ENCODE measurements at regions of chr4 and their contacts with region 1.

Region 1: GRCh38 chr4:169010125-169011023 is at the start of gene CBR4:
- DNase-seq: peak; percentile 99
- ATAC-seq: peak; percentile 99
- total RNA-seq, gene CBR4: 21.3 TPM

Region 2: GRCh38 chr4:168643111-168643795 is 367.1 kb before region 1 on chr4:
- intact Hi-C with region 1: no loop called
- DNase-seq: no peak
- ATAC-seq: no peak

Region 3: GRCh38 chr4:168731006-168731636 is 279.3 kb before region 1 on chr4:
- intact Hi-C with region 1: no loop called
- DNase-seq: no peak
- ATAC-seq: no peak

Region 4: DNA sequence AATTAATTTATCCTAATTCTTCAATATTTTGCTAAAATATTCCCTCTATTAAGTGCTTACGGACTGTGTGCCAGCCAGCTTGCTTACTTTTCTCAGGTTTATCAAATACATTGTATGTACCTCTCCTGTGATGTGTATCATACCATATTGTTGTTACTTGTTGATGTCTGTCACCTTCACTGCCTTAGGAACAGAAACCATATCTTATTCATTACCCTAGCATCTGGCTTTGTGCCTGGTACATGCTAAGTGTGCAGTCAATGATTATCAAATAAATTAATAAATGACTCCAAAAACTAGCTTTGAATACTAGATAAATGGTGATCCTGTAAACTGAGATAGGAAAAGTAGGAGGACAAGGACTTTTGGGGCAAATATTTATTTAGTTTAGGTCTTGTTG is 616.9 kb after region 1 on chr4:
- intact Hi-C with region 1: loop called (anchors 5 kb)
- DNase-seq: no peak
- ATAC-seq: peak; percentile 44

Measured in left ventricle myocardium superior (tissue), 1 donor.